Activated CD4-positive, alpha-beta T cell treated with anti-CD3 and anti-CD28 coated beads, Interleukin-2, amount 10 ng/mL, durations not matched to agents 24 days and 14 days (primary cell): ENCODE measurements at regions of chr3 and their contacts with region 1.

Region 1: DNA sequence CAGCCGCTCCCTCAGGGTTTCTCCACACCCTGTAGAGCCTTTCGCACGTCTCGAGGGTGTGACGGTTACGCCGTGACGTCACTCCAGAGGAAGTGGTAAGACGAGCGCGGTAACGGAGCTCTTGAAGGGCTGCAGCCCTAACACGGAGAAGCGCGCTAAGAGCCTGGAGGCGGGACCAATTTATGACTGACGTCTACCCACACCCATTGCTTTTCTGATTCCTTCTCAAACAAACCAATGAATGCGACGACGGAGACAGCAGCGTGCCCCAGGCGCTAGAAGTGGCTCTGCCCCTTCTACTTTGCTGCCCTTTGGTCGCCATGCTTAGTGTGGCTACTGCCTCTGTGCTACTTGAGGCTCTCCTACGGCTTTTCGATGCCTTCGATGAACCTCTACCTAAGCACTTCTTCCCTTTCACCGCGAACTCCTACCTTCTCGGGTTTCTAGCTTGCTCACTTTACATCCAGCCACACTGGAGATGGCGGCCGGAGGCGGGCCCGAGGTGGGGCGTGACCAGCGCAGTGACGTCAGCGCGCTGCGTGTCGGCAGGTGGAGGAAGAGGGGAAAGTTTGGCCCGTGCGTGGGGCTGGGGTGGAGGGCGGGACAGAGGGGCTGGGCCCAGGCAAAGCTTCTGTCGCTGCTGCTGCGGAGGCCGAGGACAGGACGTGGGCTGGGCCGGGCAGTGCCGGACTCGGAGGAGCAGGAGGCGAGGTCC is at the start of gene OXSR1:
- DNase-seq: peak; percentile 99
- H3K4me3 Mint-ChIP-seq: peak within 1 kb of the TSS; percentile 95
- H3K27ac Mint-ChIP-seq: peak within 1 kb of the TSS; percentile 98
- H3K4me1 Mint-ChIP-seq: peaks cover 44% of the 10 kb centered on the region
- H3K27me3 Mint-ChIP-seq: no peaks in the 10 kb centered on the region
- total RNA-seq, gene OXSR1: 56.4 and 58.3 TPM in 2 replicates

Region 2: GRCh38 chr3:37872413-37873160 is 292.5 kb before region 1 on chr3:
- intact Hi-C with region 1: no loop called
- DNase-seq: no peak
- H3K4me3 Mint-ChIP-seq: no peak overlapping the region
- H3K27ac Mint-ChIP-seq: no peak overlapping the region
- H3K4me1 Mint-ChIP-seq: peaks cover 3% of the 10 kb centered on the region
- H3K27me3 Mint-ChIP-seq: peaks cover 27% of the 10 kb centered on the region

Region 3: DNA sequence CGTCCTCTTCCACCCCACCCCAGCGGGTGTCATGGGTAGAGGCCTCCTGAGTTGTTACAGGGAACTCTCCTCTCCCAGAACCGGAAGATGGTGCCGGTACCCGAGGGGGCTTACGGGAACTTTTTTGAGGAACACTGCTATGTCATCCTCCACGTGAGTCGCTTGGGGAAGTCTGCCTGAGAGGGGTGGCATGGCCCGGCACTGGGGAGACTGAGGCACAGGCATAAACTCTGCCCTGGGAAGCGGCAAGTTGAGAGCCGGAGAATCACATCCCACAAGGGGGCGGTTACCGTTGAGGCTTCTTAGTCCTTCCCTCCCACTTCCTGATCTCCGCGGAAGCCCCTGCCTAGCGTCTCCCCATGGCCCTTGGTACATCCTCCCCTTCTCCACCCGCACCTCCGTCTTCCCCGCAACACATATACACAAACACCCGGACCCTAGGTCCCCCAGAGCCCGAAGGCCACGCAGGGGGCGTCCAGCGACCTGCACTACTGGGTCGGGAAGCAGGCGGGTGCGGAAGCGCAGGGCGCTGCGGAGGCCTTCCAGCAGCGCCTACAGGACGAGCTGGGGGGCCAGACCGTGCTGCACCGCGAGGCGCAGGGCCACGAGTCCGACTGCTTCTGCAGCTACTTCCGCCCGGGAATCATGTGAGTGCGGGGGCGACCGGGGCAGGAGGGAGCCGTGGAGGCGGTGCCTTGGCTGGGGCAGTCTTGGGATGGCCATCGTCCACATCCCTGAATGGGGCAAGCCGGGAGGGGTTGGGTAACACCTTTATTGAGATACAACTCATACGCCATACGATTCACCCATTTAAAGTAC is 171.1 kb before region 1 on chr3:
- intact Hi-C with region 1: loop called (anchors 1 kb)
- DNase-seq: peak; percentile 89
- H3K4me3 Mint-ChIP-seq: peak overlapping the region; percentile 97
- H3K27ac Mint-ChIP-seq: peak overlapping the region; percentile 95
- H3K4me1 Mint-ChIP-seq: peaks cover 46% of the 10 kb centered on the region
- H3K27me3 Mint-ChIP-seq: peaks cover 2% of the 10 kb centered on the region

Region 4: GRCh38 chr3:38136777-38137614 is 28.1 kb before region 1 on chr3 and contains the start of gene ACAA1:
- intact Hi-C with region 1: loop called (anchors 1 kb)
- DNase-seq: peak; percentile 99
- H3K4me3 Mint-ChIP-seq: peak within 1 kb of the TSS; percentile 90
- H3K27ac Mint-ChIP-seq: peak within 1 kb of the TSS; percentile 99
- H3K4me1 Mint-ChIP-seq: peaks cover 64% of the 10 kb centered on the region
- H3K27me3 Mint-ChIP-seq: no peaks in the 10 kb centered on the region
- total RNA-seq, gene ACAA1: 68.7 and 71.6 TPM in 2 replicates

Region 5: DNA sequence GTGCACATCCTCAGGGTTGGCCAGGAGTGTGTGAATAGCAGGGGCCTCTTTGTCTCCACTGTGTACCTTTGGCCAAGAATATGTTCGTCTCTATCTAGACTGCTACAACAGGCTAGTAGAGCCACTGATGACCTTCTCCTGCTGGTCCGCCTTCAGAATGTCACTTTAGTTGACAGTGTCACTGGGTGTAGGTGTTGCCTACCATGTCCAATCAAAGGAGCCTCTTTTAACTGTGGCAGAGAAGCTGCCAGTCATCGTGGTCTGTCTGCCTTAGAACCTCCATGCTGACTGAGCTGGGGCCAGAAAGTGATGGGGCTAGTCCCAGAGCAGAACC is 40.3 kb after region 1 on chr3:
- intact Hi-C with region 1: loop called (anchors 2 kb)
- DNase-seq: peak; percentile 62
- H3K4me3 Mint-ChIP-seq: peak overlapping the region; percentile 2
- H3K27ac Mint-ChIP-seq: peak overlapping the region; percentile 85
- H3K4me1 Mint-ChIP-seq: peaks cover 51% of the 10 kb centered on the region
- H3K27me3 Mint-ChIP-seq: no peaks in the 10 kb centered on the region

Region 6: DNA sequence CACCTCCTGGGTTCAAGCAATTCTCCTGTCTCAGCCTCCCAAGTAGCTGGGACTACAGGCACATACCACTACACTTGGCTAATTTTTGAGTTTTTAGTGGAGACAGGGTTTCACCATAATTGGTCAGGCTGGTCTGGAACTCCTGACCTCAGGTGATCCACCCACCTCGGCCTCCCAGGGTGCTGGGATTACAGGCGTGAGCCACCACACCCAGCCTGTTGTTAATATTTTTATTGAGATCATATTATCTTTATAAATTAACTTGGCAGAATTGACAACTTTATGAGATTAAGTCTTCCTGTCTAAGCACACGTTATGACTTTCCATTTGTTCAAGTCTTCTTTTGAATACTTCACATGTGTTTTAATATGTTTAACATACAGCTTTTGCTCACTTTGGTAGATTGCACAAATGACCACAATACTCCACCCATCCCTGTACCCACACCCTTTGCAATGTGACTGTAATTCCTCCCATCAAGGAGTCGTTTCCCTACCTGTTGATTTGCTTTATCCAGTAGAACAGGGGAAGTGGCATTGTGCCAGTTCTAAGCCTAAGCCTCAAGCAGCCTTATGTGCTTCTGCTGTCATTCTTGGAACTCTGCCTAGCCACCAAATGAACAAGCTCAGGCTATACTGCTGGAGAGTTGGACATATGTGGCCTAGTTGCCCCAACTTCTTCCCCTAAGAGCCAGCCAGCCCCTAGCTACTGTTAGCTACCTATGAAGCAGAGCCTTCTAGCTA is 189.6 kb after region 1 on chr3:
- intact Hi-C with region 1: no loop called
- DNase-seq: no peak
- H3K4me3 Mint-ChIP-seq: no peak overlapping the region
- H3K27ac Mint-ChIP-seq: no peak overlapping the region
- H3K4me1 Mint-ChIP-seq: peaks cover 3% of the 10 kb centered on the region
- H3K27me3 Mint-ChIP-seq: no peaks in the 10 kb centered on the region

Region 7: GRCh38 chr3:38453075-38453912 is 288.2 kb after region 1 on chr3 and contains the start of gene ACVR2B:
- intact Hi-C with region 1: loop called (anchors 10 kb)
- DNase-seq: peak; percentile 93
- H3K4me3 Mint-ChIP-seq: peak within 1 kb of the TSS; percentile 99
- H3K27ac Mint-ChIP-seq: peak within 1 kb of the TSS; percentile 92
- H3K4me1 Mint-ChIP-seq: peaks cover 19% of the 10 kb centered on the region
- H3K27me3 Mint-ChIP-seq: peaks cover 24% of the 10 kb centered on the region
- total RNA-seq, gene ACVR2B: 12.2 and 12.6 TPM in 2 replicates

Region 8: GRCh38 chr3:39406368-39407258 is 1241.5 kb after region 1 on chr3 and contains the start of gene RPSA:
- intact Hi-C with region 1: loop called (anchors 10 kb)
- DNase-seq: peak; percentile 99
- H3K4me3 Mint-ChIP-seq: peak within 1 kb of the TSS; percentile 92
- H3K27ac Mint-ChIP-seq: peak within 1 kb of the TSS; percentile 99
- H3K4me1 Mint-ChIP-seq: peaks cover 40% of the 10 kb centered on the region
- H3K27me3 Mint-ChIP-seq: peaks cover 2% of the 10 kb centered on the region
- total RNA-seq, gene RPSA: 1,932 and 1,935 TPM in 2 replicates